ENCODE measurements at regions of chr5 and their contacts with region 1.

Region 1: DNA sequence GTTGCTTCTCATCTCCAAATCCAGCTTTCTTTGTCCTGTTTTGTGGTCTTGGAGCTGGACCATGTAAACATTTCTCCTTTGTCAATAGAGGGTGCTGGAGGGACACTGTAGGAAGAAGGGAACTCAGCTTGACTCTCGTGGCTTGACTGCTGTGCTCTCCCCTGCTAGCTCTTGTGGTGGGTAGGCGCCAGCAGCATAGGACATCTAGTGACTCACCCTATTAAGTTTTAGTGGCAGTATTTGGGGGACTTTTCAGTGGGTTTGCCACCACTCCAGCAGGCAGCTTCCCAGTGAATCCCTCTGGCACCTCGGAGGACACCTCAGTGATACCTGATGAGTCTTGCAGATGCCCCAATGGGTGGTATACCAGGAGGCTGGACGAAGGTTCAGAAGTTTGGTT is 97.8 kb downstream of the TSSK1B start:
- DNase-seq: peak; percentile 26
- H3K4me3 ChIP-seq: no peak overlapping the region
- H3K27ac ChIP-seq: peak overlapping the region in 1 of 2 donors; percentile 28
- H3K4me1 ChIP-seq: no peaks in the 10 kb centered on the region
- H3K27me3 ChIP-seq: no peaks in the 10 kb centered on the region
- CTCF ChIP-seq: peak in 1 of 4 experiments; percentile 13
- POLR2A ChIP-seq: no peak

Region 2: DNA sequence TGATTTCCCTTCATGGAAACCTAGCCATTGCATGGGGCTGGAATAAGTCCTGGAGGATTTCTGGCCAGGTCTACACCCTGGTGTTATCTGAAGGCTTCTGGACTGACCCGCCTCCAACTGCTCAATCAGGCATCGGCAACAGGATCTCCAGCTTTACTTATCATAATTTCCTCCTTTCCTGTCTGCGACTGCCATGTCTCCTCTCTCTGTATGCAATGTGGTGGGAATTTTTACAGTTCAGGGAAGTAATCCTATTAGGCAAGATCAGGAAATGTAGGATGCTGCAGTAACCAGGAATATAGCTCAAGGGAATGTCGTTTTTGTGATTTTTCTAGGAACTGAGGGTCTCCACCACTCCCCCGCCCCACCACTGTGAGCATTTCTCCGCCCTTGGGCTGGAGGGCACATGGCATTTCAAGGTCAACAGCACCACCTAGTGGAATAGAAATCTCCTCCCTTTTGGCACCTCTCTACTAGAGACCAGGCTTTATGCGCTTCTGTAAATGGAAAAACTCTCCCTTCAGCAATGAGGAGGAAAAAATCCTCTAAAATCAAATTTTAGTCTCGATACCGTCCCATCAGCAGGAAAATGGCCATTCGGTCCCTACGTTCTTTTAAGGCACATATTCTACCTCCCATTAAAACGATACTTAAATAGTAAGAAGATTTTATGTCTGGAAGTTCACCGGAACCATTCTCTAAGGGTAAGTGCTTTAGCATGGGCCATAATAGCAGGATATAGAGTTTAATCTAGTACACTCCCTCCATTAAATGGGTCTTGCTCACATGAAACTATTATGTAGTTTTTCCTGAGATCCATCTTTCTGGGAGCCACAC is 269.5 kb after region 1 on chr5:
- intact Hi-C with region 1: loop called (anchors 5 kb)
- DNase-seq: peak; percentile 33
- H3K4me3 ChIP-seq: no peak overlapping the region
- H3K27ac ChIP-seq: no peak overlapping the region
- H3K4me1 ChIP-seq: no peaks in the 10 kb centered on the region
- H3K27me3 ChIP-seq: no peaks in the 10 kb centered on the region
- CTCF ChIP-seq: peak; percentile 57 to 74 (median 70)
- POLR2A ChIP-seq: no peak